Activated T-helper 1 cell treated with anti-CD3 and anti-CD28 coated beads, Interleukin-12 subunit alpha, Interleukin-12 subunit beta, Interleukin-2, Interleukin-4 antibody, amounts not matched to agents 30 ng/mL and 10 ng/mL and 1 ng/mL, durations not matched to agents 14 hours and 24 hours and 36 hours (primary cell): ENCODE measurements at regions of chr4 and their contacts with region 1.

Region 1: GRCh38 chr4:18366892-18367291 is 345.3 kb upstream of the LCORL start:
- DNase-seq: no peak
- H3K4me3 Mint-ChIP-seq: no peak overlapping the region
- H3K27ac Mint-ChIP-seq: no peak overlapping the region
- H3K4me1 Mint-ChIP-seq: no peaks in the 10 kb centered on the region
- H3K27me3 Mint-ChIP-seq: peaks cover 6% of the 10 kb centered on the region

Region 2: GRCh38 chr4:17817020-17817419 is 549.9 kb before region 1 on chr4:
- intact Hi-C with region 1: loop called (anchors 1 kb)
- DNase-seq: no peak
- H3K4me3 Mint-ChIP-seq: peak overlapping the region; percentile 51
- H3K27ac Mint-ChIP-seq: peak overlapping the region; percentile 63
- H3K4me1 Mint-ChIP-seq: peaks cover 66% of the 10 kb centered on the region
- H3K27me3 Mint-ChIP-seq: no peaks in the 10 kb centered on the region

Region 3: DNA sequence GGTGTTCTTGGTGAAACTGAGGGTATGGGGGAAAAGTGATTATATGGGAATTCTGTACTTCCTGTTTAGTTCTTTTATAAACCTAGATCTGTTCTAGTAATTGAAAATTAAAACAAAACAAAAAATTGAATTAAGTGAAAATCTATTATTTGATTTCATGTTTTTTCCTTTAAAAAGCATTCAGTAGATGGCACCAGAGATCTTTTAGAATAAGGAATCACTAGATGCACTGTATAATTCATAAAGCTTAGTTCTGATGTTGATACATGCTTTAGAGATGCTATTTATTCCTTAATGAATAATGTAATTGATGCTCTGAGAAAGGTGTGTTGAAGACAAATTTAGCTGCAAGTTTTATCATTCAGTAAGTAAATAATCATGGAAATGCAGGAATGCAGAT is 432.6 kb before region 1 on chr4:
- intact Hi-C with region 1: loop called (anchors 1 kb)
- DNase-seq: no peak
- H3K4me3 Mint-ChIP-seq: no peak overlapping the region
- H3K27ac Mint-ChIP-seq: no peak overlapping the region
- H3K4me1 Mint-ChIP-seq: no peaks in the 10 kb centered on the region
- H3K27me3 Mint-ChIP-seq: no peaks in the 10 kb centered on the region

Region 4: DNA sequence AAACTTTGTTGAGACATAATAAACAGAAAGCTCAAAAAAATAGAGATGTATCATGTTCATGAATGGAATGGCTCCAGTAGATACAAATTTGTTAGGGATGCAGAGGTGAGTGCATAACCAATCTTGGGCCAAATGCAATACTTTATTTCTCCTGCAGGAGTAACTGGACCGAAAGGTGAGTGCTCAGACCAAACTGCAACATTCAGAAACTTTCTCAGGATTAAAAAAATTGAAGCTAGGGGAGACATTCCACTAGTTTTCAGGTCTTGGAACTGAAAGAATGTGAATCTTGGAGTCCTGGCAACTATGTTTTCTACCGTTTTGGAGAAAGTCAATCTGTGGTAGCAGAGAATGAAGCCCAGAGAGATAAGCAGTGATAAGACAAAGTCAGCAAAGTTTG is 324.1 kb before region 1 on chr4:
- intact Hi-C with region 1: loop called (anchors 5 kb)
- DNase-seq: no peak
- H3K4me3 Mint-ChIP-seq: no peak overlapping the region
- H3K27ac Mint-ChIP-seq: no peak overlapping the region
- H3K4me1 Mint-ChIP-seq: no peaks in the 10 kb centered on the region
- H3K27me3 Mint-ChIP-seq: peaks cover 21% of the 10 kb centered on the region